ENCODE measurements at regions of chr12 and their contacts with region 1.

Region 1: GRCh38 chr12:64469455-64470142 is 17.7 kb downstream of the TBK1 start:
- DNase-seq: no peak
- H3K4me3 ChIP-seq: no peak overlapping the region
- H3K27ac ChIP-seq: no peak overlapping the region
- H3K4me1 ChIP-seq: peaks cover 0 to 11% (median 0%) of the 10 kb centered on the region in 4 donors
- H3K27me3 ChIP-seq: no peaks in the 10 kb centered on the region
- CTCF ChIP-seq: no peak
- EP300 ChIP-seq: no peak
- POLR2A ChIP-seq: no peak

Region 2: GRCh38 chr12:64431791-64432190 is 37.8 kb before region 1 on chr12:
- intact Hi-C with region 1: loop called (anchors 5 kb)
- DNase-seq: no peak
- H3K4me3 ChIP-seq: no peak overlapping the region
- H3K27ac ChIP-seq: no peak overlapping the region
- H3K4me1 ChIP-seq: no peaks in the 10 kb centered on the region
- H3K27me3 ChIP-seq: no peaks in the 10 kb centered on the region
- CTCF ChIP-seq: no peak
- EP300 ChIP-seq: no peak
- POLR2A ChIP-seq: no peak